BJ (cell line): ENCODE measurements at regions of chr7 and their contacts with region 1.

Region 1: DNA sequence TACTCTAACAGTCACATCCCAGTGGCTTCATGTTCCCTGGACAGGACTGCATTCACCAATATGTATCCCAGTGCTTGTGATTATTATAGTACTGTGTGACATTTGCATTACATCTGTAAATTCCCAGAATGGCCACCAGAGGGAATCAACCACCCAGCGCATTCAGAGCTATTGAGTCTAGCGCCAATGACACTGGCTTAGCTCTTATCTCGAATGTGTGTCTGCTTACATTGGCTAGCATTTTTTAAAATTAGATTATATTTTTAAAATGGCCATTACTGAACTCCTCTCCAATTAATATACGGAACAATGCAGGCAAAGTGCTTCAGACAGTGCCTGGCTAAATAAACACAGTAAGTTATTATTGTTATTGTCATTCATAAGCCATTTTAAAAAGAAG is 36.3 kb downstream of the TRIL start:
- DNase-seq: no peak
- H3K4me3 ChIP-seq: no peak overlapping the region
- H3K27me3 ChIP-seq: peaks cover 6% of the 10 kb centered on the region
- CTCF ChIP-seq: peak; percentile 85

Region 2: GRCh38 chr7:28904578-28905048 is 17.2 kb before region 1 on chr7:
- CTCF ChIA-PET with region 1: interaction called, 52 read pairs
- POLR2A ChIA-PET with region 1: no interaction called
- DNase-seq: no peak
- H3K4me3 ChIP-seq: 0 out of 2 replicates have a peak overlapping the region, but pooled peaks have one; percentile 1
- H3K27me3 ChIP-seq: no peaks in the 10 kb centered on the region
- CTCF ChIP-seq: no peak

Region 3: DNA sequence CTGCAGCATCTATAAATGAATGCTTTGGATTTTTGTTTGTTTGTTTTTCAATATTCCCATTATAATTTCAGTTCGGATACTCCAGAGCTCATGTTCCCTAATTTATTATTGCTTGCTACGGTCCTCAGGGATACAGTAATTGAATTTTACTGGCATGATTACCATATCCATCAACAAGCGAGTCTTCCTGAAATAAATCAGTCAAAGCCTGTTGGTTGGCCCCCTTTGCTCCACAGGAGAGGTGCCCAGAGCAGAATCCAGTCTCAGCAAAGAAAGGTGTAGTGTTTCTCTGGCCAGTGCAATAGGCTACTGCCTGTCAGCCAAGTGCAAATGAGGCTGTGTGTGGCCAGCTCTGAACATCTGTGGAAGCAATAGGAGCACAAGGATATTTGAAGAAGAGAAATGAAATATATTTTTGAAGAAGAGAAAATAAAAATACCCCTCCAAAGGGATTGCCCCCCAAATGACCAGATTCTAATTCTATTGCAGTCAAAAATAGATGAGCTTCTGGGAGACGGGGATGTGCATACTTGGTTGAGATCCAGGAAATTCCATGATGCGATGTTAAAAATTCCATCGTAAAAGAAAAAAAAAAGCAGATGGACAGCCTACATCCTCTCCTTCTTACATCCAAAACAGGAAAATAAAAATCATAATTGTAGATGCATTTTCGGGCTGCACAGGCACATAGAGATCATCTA is 18.2 kb after region 1 on chr7:
- CTCF ChIA-PET with region 1: interaction called, 50 read pairs
- POLR2A ChIA-PET with region 1: no interaction called
- DNase-seq: no peak
- H3K4me3 ChIP-seq: no peak overlapping the region
- H3K27me3 ChIP-seq: peaks cover 5% of the 10 kb centered on the region
- CTCF ChIP-seq: no peak

Region 4: GRCh38 chr7:29084832-29085231 is 163.0 kb after region 1 on chr7:
- CTCF ChIA-PET with region 1: interaction called, 555 read pairs
- POLR2A ChIA-PET with region 1: no interaction called
- DNase-seq: no peak
- H3K4me3 ChIP-seq: no peak overlapping the region
- H3K27me3 ChIP-seq: no peaks in the 10 kb centered on the region
- CTCF ChIP-seq: no peak

Region 5: DNA sequence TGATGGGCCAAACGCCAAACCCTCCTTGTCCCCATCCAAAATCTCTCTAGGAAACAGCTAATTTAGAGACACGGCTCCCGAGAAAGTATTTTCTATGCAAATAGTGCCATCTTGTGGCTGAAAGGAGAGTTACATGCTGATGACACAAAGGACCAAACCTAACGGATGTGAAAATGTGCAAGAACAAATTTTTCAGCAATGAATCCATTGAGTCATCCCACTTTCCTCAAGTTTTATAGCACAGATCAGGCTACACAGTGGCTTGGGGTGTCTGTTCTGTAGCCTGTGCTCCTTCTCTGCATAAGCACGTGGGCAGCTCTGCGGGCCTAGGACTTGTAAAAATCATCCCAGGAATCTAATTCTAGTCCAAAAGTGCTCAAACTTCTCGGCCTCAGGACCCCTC is 487.0 kb after region 1 on chr7:
- CTCF ChIA-PET with region 1: interaction called, 129 read pairs
- POLR2A ChIA-PET with region 1: no interaction called
- DNase-seq: peak; percentile 70
- H3K4me3 ChIP-seq: no peak overlapping the region
- H3K27me3 ChIP-seq: no peaks in the 10 kb centered on the region; the same call in 1 of the 2 replicates
- CTCF ChIP-seq: peak; percentile 75